CD4-positive, alpha-beta memory T cell (primary cell): ENCODE measurements at regions of chr6 and their contacts with region 1.

Region 1: GRCh38 chr6:108052706-108053105 is 21.8 kb downstream of the OSTM1 start:
- DNase-seq: no peak
- H3K4me3 ChIP-seq: no peak overlapping the region
- H3K4me3 Mint-ChIP-seq: no peak overlapping the region
- H3K27ac ChIP-seq: no peak overlapping the region
- H3K27ac Mint-ChIP-seq: peak overlapping the region in 2 of 7 donors; percentile 57 to 80
- H3K4me1 ChIP-seq: no peaks in the 10 kb centered on the region
- H3K4me1 Mint-ChIP-seq: peaks cover 0 to 5% (median 3%) of the 10 kb centered on the region in 4 donors
- H3K27me3 ChIP-seq: no peaks in the 10 kb centered on the region
- H3K27me3 Mint-ChIP-seq: no peaks in the 10 kb centered on the region

Region 2: GRCh38 chr6:107674995-107675738 is 377.5 kb before region 1 on chr6:
- CTCF ChIA-PET with region 1: interaction called, 20 read pairs
- POLR2A ChIA-PET with region 1: no interaction called
- intact Hi-C with region 1: loop called (anchors 1 kb)
- DNase-seq: peak; percentile 83 to 86 (median 84)
- H3K4me3 ChIP-seq: peak overlapping the region in 1 of 2 donors; percentile 6
- H3K4me3 Mint-ChIP-seq: peak overlapping the region in 6 of 8 donors; percentile 49 to 81 (median 64)
- H3K27ac ChIP-seq: no peak overlapping the region
- H3K27ac Mint-ChIP-seq: peak overlapping the region; percentile 32 to 92 (median 91)
- H3K4me1 ChIP-seq: peaks cover 17% of the 10 kb centered on the region
- H3K4me1 Mint-ChIP-seq: peaks cover 6 to 14% (median 11%) of the 10 kb centered on the region in 4 donors
- H3K27me3 ChIP-seq: no peaks in the 10 kb centered on the region
- H3K27me3 Mint-ChIP-seq: no peaks in the 10 kb centered on the region